ENCODE measurements at regions of chr2 and their contacts with region 1.

Region 1: GRCh38 chr2:237060534-237061312 is 25.0 kb upstream of the COPS8 start:
- DNase-seq: peak in 1 of 2 experiments; percentile 66
- H3K4me3 ChIP-seq: no peak overlapping the region
- H3K27ac ChIP-seq: no peak overlapping the region
- H3K4me1 ChIP-seq: peaks cover 0 to 2% (median under 1%) of the 10 kb centered on the region in 4 experiments; a peak in 1 of 7 replicates
- H3K27me3 ChIP-seq: no peaks in the 10 kb centered on the region
- CTCF ChIP-seq: peak; percentile 62 to 78 (median 76)
- EP300 ChIP-seq: no peak
- POLR2A ChIP-seq: no peak
- RAD21 ChIP-seq: peak; percentile 93

Region 2: GRCh38 chr2:236309669-236310029 is 751.1 kb before region 1 on chr2:
- CTCF ChIA-PET with region 1: interaction called, 43 read pairs
- POLR2A ChIA-PET with region 1: no interaction called
- DNase-seq: peak; percentile 13 to 77
- H3K4me3 ChIP-seq: no peak overlapping the region
- H3K27ac ChIP-seq: no peak overlapping the region
- H3K4me1 ChIP-seq: peaks cover 3 to 12% (median 9%) of the 10 kb centered on the region in 4 experiments; a peak in 5 of 7 replicates
- H3K27me3 ChIP-seq: no peaks in the 10 kb centered on the region
- CTCF ChIP-seq: peak; percentile 80 to 83 (median 82)
- EP300 ChIP-seq: no peak
- POLR2A ChIP-seq: no peak
- RAD21 ChIP-seq: peak; percentile 93 to 97

Region 3: DNA sequence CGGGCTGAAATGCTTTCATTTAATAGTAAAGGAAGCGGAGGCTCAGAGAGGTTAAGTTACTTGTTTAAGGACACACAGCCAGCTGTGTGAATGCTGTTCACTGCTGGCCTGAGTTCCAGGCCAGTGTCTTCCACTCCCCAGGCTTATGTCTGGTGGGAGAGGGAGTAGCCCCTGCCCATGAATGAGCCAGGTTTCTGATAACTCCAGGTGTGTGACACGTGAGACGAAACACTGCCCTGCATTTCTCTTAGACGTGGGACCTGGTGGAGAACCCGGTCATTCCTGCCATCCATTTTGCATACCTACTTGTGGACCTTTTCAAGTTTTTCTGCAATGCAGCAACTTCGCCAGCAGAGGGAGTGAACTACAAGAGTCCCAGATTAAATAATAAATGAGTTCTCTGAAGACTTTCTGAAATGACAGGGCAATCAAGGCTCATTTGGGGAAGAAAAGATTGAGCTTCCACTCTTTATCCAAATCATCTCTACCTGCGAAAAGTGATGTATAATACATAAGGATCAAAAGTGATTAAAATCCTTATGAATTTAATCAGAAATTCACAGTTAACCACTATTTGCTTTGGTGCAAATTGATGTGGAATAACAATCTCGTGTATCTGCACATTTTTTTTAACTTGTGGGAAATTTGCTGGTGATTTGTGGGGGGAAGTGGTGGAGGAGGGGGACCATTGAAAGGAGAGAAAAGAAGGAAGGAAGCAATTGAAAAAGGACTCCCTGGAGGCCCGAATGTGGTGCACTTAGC is 717.1 kb before region 1 on chr2:
- CTCF ChIA-PET with region 1: interaction called, 12 read pairs
- POLR2A ChIA-PET with region 1: no interaction called
- DNase-seq: peak; percentile 49 to 50
- H3K4me3 ChIP-seq: no peak overlapping the region
- H3K27ac ChIP-seq: no peak overlapping the region
- H3K4me1 ChIP-seq: peaks cover 0 to 8% (median 5%) of the 10 kb centered on the region in 4 experiments; a peak in 3 of 7 replicates
- H3K27me3 ChIP-seq: no peaks in the 10 kb centered on the region
- CTCF ChIP-seq: peak in 2 of 3 experiments; percentile 63 to 82; a peak in 3 of 4 replicates
- EP300 ChIP-seq: no peak
- POLR2A ChIP-seq: no peak
- RAD21 ChIP-seq: peak; percentile 68 to 73

Region 4: GRCh38 chr2:236352761-236353593 is 707.7 kb before region 1 on chr2:
- CTCF ChIA-PET with region 1: interaction called, 10 read pairs
- POLR2A ChIA-PET with region 1: no interaction called
- DNase-seq: no peak
- H3K4me3 ChIP-seq: no peak overlapping the region
- H3K27ac ChIP-seq: no peak overlapping the region
- H3K4me1 ChIP-seq: peaks cover 0 to 2% (median 0%) of the 10 kb centered on the region in 4 experiments; a peak in 3 of 7 replicates
- H3K27me3 ChIP-seq: no peaks in the 10 kb centered on the region
- CTCF ChIP-seq: peak in 2 of 3 experiments; percentile 59 to 60; a peak in 3 of 4 replicates
- EP300 ChIP-seq: no peak
- POLR2A ChIP-seq: no peak
- RAD21 ChIP-seq: peak; percentile 83 to 89

Region 5: GRCh38 chr2:237026981-237027711 is 33.6 kb before region 1 on chr2:
- CTCF ChIA-PET with region 1: interaction called, 21 read pairs
- POLR2A ChIA-PET with region 1: no interaction called
- DNase-seq: peak; percentile 29 to 74
- H3K4me3 ChIP-seq: no peak overlapping the region
- H3K27ac ChIP-seq: no peak overlapping the region
- H3K4me1 ChIP-seq: no peaks in the 10 kb centered on the region
- H3K27me3 ChIP-seq: no peaks in the 10 kb centered on the region; a peak in 2 of 7 replicates
- CTCF ChIP-seq: peak; percentile 82 to 97 (median 82)
- EP300 ChIP-seq: no peak
- POLR2A ChIP-seq: no peak
- RAD21 ChIP-seq: peak; percentile 99 to 100

Region 6: GRCh38 chr2:237072067-237072931 is 11.6 kb after region 1 on chr2:
- CTCF ChIA-PET with region 1: interaction called, 15 read pairs
- POLR2A ChIA-PET with region 1: no interaction called
- DNase-seq: peak in 1 of 2 experiments; percentile 99
- H3K4me3 ChIP-seq: no peak overlapping the region
- H3K27ac ChIP-seq: no peak overlapping the region
- H3K4me1 ChIP-seq: no peaks in the 10 kb centered on the region
- H3K27me3 ChIP-seq: no peaks in the 10 kb centered on the region
- CTCF ChIP-seq: peak; percentile 84 to 90 (median 86)
- EP300 ChIP-seq: no peak
- POLR2A ChIP-seq: no peak
- RAD21 ChIP-seq: peak; percentile 94 to 95

Measured in H1 (cell line).